B cell (primary cell): ENCODE measurements at regions of chr5 and their contacts with region 1.

Region 1: GRCh38 chr5:88883059-88883835 is at the start of gene MEF2C:
- DNase-seq: peak; percentile 92
- ATAC-seq: peak; percentile 60
- H3K4me3 ChIP-seq: peak within 1 kb of the TSS; percentile 79 to 99 (median 89)
- H3K4me3 Mint-ChIP-seq: peak within 1 kb of the TSS; percentile 98
- H3K27ac ChIP-seq: peak within 1 kb of the TSS; percentile 73 to 90
- H3K27ac Mint-ChIP-seq: peak within 1 kb of the TSS; percentile 97
- H3K4me1 ChIP-seq: peaks cover 28 to 36% of the 10 kb centered on the region in 2 donors
- H3K4me1 Mint-ChIP-seq: peaks cover 50% of the 10 kb centered on the region
- H3K27me3 ChIP-seq: no peaks in the 10 kb centered on the region
- H3K27me3 Mint-ChIP-seq: no peaks in the 10 kb centered on the region
- CTCF ChIP-seq: no peak
- total RNA-seq, gene MEF2C: 333 and 354 TPM in 2 replicates

Region 2: DNA sequence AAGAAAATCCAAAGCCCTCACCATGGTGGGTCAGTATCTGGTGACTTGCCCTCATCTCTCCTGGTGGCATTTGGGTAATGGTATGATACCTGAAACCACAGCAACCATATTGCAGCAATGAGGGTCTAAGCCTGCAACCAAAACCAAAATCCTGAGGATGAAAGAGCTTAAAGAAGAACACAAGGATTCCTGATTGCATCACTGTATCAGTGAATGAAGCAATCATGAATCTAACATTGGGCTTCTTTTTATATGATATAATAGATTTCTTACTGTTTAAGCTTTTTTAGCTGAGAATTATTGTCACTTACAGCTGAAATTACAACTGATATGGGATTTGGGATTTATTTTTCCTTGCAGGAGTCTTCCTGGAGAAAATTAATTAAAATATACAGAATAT is 270.2 kb before region 1 on chr5:
- CTCF ChIA-PET with region 1: no interaction called
- POLR2A ChIA-PET with region 1: no interaction called
- intact Hi-C with region 1: no loop called
- DNase-seq: no peak
- ATAC-seq: no peak
- H3K4me3 ChIP-seq: no peak overlapping the region
- H3K4me3 Mint-ChIP-seq: no peak overlapping the region
- H3K27ac ChIP-seq: no peak overlapping the region
- H3K27ac Mint-ChIP-seq: no peak overlapping the region
- H3K4me1 ChIP-seq: no peaks in the 10 kb centered on the region
- H3K4me1 Mint-ChIP-seq: no peaks in the 10 kb centered on the region
- H3K27me3 ChIP-seq: peaks cover 0 to 3% (median 0%) of the 10 kb centered on the region in 4 experiments
- H3K27me3 Mint-ChIP-seq: peaks cover 23% of the 10 kb centered on the region
- CTCF ChIP-seq: no peak

Region 3: GRCh38 chr5:88826646-88827585 is 56.3 kb before region 1 on chr5:
- CTCF ChIA-PET with region 1: interaction called, 8 read pairs
- POLR2A ChIA-PET with region 1: interaction called, 12 read pairs
- intact Hi-C with region 1: loop called (anchors 1 kb)
- DNase-seq: peak; percentile 96
- ATAC-seq: peak; percentile 79
- H3K4me3 ChIP-seq: peak overlapping the region; percentile 3 to 61 (median 35)
- H3K4me3 Mint-ChIP-seq: peak overlapping the region; percentile 78
- H3K27ac ChIP-seq: peak overlapping the region; percentile 92 to 94
- H3K27ac Mint-ChIP-seq: peak overlapping the region; percentile 94
- H3K4me1 ChIP-seq: peaks cover 74 to 94% of the 10 kb centered on the region in 2 donors
- H3K4me1 Mint-ChIP-seq: peaks cover 83% of the 10 kb centered on the region
- H3K27me3 ChIP-seq: no peaks in the 10 kb centered on the region
- H3K27me3 Mint-ChIP-seq: no peaks in the 10 kb centered on the region
- CTCF ChIP-seq: no peak

Region 4: DNA sequence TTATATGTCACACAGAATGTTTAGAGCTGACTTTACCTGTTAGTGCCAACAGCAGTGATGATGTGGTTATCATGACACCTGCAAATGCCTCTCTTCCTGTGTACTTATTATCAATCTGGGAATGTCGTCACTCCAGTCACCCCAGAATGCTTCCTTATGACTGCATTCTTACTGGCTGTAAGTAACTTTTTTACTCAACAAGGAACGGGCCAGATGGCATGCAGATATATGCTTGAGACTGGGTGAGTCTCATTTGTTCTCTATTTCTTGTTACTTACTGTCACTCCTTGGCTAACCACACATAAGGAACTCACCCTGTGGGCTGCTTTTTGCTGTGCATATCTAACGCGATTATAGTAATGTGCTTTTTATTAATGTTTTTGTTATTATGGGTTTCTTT is 385.2 kb after region 1 on chr5:
- CTCF ChIA-PET with region 1: no interaction called
- POLR2A ChIA-PET with region 1: interaction called, 4 read pairs
- intact Hi-C with region 1: loop called (anchors 5 kb)
- DNase-seq: peak; percentile 62
- ATAC-seq: peak; percentile 45
- H3K4me3 ChIP-seq: peak overlapping the region in 1 of 5 experiments; percentile 6
- H3K4me3 Mint-ChIP-seq: peak overlapping the region; percentile 51
- H3K27ac ChIP-seq: peak overlapping the region; percentile 74 to 85
- H3K27ac Mint-ChIP-seq: peak overlapping the region; percentile 82
- H3K4me1 ChIP-seq: peaks cover 71 to 75% of the 10 kb centered on the region in 2 donors
- H3K4me1 Mint-ChIP-seq: peaks cover 71% of the 10 kb centered on the region
- H3K27me3 ChIP-seq: no peaks in the 10 kb centered on the region
- H3K27me3 Mint-ChIP-seq: no peaks in the 10 kb centered on the region
- CTCF ChIP-seq: no peak

Region 5: GRCh38 chr5:89435347-89435746 is 552.1 kb after region 1 on chr5:
- CTCF ChIA-PET with region 1: no interaction called
- POLR2A ChIA-PET with region 1: no interaction called
- intact Hi-C with region 1: loop called (anchors 5 kb)
- DNase-seq: peak; percentile 77
- ATAC-seq: peak; percentile 78
- H3K4me3 ChIP-seq: peak overlapping the region in 4 of 5 experiments; percentile 1 to 45 (median 8)
- H3K4me3 Mint-ChIP-seq: peak overlapping the region; percentile 66
- H3K27ac ChIP-seq: peak overlapping the region; percentile 81 to 89
- H3K27ac Mint-ChIP-seq: peak overlapping the region; percentile 86
- H3K4me1 ChIP-seq: peaks cover 53 to 71% of the 10 kb centered on the region in 2 donors
- H3K4me1 Mint-ChIP-seq: peaks cover 59% of the 10 kb centered on the region
- H3K27me3 ChIP-seq: no peaks in the 10 kb centered on the region
- H3K27me3 Mint-ChIP-seq: no peaks in the 10 kb centered on the region
- CTCF ChIP-seq: no peak

Region 6: GRCh38 chr5:90184764-90185163 is 1301.5 kb after region 1 on chr5:
- CTCF ChIA-PET with region 1: no interaction called
- POLR2A ChIA-PET with region 1: no interaction called
- intact Hi-C with region 1: loop called (anchors 10 kb)
- DNase-seq: peak; percentile 7
- ATAC-seq: no peak
- H3K4me3 ChIP-seq: no peak overlapping the region
- H3K4me3 Mint-ChIP-seq: peak overlapping the region; percentile 24
- H3K27ac ChIP-seq: no peak overlapping the region
- H3K27ac Mint-ChIP-seq: peak overlapping the region; percentile 39
- H3K4me1 ChIP-seq: no peaks in the 10 kb centered on the region
- H3K4me1 Mint-ChIP-seq: peaks cover 5% of the 10 kb centered on the region
- H3K27me3 ChIP-seq: no peaks in the 10 kb centered on the region
- H3K27me3 Mint-ChIP-seq: peaks cover 9% of the 10 kb centered on the region
- CTCF ChIP-seq: no peak

Region 7: DNA sequence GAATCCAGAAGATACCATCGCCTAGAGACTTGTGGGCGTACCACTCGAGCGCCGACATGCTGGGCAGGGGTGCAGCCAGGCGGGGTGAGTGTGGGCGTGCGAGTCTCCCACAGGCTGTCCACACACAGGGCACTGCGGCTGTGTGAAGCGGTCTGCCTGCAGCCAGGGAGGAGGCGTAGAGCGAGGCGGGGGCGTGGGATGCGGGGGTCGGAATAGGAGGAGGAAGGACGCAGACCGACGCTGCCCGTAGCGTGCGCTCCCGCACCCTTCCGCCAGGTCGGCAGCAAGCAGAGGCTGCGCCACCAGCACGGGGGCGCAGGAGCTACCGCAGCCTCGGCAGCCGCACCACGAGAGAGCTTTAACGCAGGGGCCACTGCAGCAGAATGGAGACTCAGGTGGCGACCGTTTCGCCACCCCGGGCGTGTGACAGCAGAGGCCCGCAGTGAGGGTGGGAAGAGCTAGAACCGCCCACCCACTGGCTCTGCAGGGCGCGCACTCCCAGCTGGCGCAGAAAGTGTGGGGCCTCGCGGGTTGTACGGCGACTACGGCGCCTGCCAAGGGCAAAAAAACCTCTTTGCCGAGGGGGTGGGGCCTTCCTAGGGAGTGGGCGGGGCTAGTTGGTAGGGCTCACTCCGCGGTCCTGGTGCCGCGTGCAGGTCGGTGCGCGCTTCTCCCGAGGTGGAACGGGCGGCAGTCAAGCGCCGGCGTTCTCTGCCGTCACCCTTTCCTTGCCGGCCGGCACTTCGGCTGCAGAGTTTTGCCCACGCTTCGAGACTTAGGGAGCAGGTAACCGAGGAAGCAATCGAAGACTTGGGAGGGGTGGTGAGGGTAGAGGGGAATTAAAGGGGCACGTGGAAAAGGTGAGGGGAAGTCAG is 1591.2 kb after region 1 on chr5 and contains the starts of genes MBLAC2 and POLR3G:
- CTCF ChIA-PET with region 1: no interaction called
- POLR2A ChIA-PET with region 1: no interaction called
- intact Hi-C with region 1: loop called (anchors 10 kb)
- DNase-seq: peak; percentile 95
- ATAC-seq: peak; percentile 92
- H3K4me3 ChIP-seq: peak within 1 kb of the TSS; percentile 67 to 94 (median 86)
- H3K4me3 Mint-ChIP-seq: peak within 1 kb of the TSS; percentile 96
- H3K27ac ChIP-seq: peak within 1 kb of the TSS; percentile 53 to 55
- H3K27ac Mint-ChIP-seq: peak within 1 kb of the TSS; percentile 94
- H3K4me1 ChIP-seq: peaks cover 11 to 15% of the 10 kb centered on the region in 2 donors
- H3K4me1 Mint-ChIP-seq: peaks cover 24% of the 10 kb centered on the region
- H3K27me3 ChIP-seq: no peaks in the 10 kb centered on the region
- H3K27me3 Mint-ChIP-seq: no peaks in the 10 kb centered on the region
- CTCF ChIP-seq: peak; percentile 64
- total RNA-seq, gene MBLAC2: 11.5 and 13.3 TPM in 2 replicates
- total RNA-seq, gene POLR3G: 2.0 and 2.3 TPM in 2 replicates